Dorsolateral prefrontal cortex (tissue), 120 donors: ENCODE measurements at regions of chr22 and their contacts with region 1.

Region 1: DNA sequence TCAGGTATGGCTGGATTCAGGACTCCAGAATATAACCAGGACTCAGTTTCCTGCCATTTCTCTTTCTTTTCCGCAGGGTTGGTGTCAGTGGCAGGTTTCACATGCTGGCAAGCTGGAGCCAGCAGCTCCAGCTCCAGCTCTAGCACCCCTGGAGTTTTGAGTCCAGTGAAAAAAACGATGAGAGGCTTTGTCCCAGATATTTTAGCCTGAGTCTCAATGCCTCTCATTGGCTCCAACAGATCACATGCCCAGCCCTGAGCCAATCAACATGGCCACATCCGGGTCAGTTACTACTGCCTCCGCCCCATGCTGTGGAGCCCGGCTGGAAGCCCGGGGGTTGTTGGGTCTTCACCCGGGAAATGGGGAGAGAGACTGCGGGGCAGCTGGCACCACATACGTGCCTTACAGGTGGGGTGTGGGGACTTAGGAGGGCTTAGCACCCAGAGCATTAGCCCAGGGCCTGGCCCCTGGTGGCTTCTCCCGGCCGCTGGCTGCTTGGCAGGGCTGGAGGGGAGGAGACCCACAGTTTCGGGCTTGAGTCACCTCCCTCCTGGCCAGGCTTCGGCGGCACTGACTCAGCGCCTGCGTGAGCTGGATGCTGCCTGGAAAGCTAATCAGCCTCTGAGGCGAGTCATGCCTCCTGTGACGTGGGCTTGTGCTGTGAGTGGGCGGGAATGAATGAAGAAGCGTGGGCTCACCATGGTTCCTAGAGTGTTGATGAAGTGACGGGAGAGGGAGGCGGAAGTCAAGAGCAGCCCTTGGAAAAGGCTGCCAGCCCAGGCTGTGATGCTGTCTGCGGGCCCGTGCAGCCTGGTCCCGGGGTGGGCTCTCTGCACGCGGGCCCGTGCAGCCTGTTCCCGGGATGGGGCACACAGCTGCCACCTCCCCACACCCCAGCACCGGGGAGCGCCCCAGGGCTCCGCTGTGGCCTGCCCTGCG is 15.3 kb upstream of the MRTFA start:
- DNase-seq: peak; percentile 91 to 99 (median 97)
- H3K4me3 ChIP-seq: peak overlapping the region; percentile 54 to 93 (median 74)
- H3K27ac ChIP-seq: peak overlapping the region; percentile 89 to 100 (median 98)
- H3K27me3 ChIP-seq: no peaks in the 10 kb centered on the region
- CTCF ChIP-seq: peak in 20 of 56 donors; percentile 0 to 38 (median 17)

Region 2: GRCh38 chr22:40426594-40427333 is 225.1 kb before region 1 on chr22:
- intact Hi-C with region 1: loop called in 1 of 2 experiments (anchors 5 kb)
- DNase-seq: peak in 8 of 10 donors; percentile 70 to 93 (median 83)
- H3K4me3 ChIP-seq: peak overlapping the region in 10 of 59 donors; percentile 1 to 48 (median 8)
- H3K27ac ChIP-seq: peak overlapping the region; percentile 41 to 94 (median 84)
- H3K27me3 ChIP-seq: no peaks in the 10 kb centered on the region
- CTCF ChIP-seq: peak in 6 of 56 donors; percentile 12 to 38 (median 18)

Region 3: GRCh38 chr22:40818747-40819598 is 167.1 kb after region 1 on chr22 and contains the start of gene SLC25A17:
- intact Hi-C with region 1: loop called in 1 of 2 experiments (anchors 5 kb)
- DNase-seq: peak; percentile 73 to 93 (median 87)
- H3K4me3 ChIP-seq: peak within 1 kb of the TSS; percentile 66 to 100 (median 94)
- H3K27ac ChIP-seq: peak within 1 kb of the TSS in 50 of 59 donors; percentile 3 to 90 (median 71)
- H3K27me3 ChIP-seq: no peaks in the 10 kb centered on the region
- CTCF ChIP-seq: peak in 44 of 56 donors; percentile 15 to 60 (median 38)
- total RNA-seq, gene SLC25A17: 11.1 to 26.6 (median 17.2) TPM

Region 4: GRCh38 chr22:40856513-40857308 is 204.9 kb after region 1 on chr22 and contains the starts of genes ST13 and XPNPEP3:
- intact Hi-C with region 1: loop called in 1 of 2 experiments (anchors 5 kb)
- DNase-seq: peak; percentile 93 to 97 (median 95)
- H3K4me3 ChIP-seq: peak within 1 kb of the TSS; percentile 70 to 100 (median 94)
- H3K27ac ChIP-seq: peak within 1 kb of the TSS; percentile 94 to 100 (median 100)
- H3K27me3 ChIP-seq: no peaks in the 10 kb centered on the region
- CTCF ChIP-seq: peak in 26 of 56 donors; percentile 3 to 40 (median 19)
- total RNA-seq, gene ST13: 157 to 321 (median 196) TPM
- total RNA-seq, gene XPNPEP3: 13.7 to 36.2 (median 20.5) TPM

Region 5: DNA sequence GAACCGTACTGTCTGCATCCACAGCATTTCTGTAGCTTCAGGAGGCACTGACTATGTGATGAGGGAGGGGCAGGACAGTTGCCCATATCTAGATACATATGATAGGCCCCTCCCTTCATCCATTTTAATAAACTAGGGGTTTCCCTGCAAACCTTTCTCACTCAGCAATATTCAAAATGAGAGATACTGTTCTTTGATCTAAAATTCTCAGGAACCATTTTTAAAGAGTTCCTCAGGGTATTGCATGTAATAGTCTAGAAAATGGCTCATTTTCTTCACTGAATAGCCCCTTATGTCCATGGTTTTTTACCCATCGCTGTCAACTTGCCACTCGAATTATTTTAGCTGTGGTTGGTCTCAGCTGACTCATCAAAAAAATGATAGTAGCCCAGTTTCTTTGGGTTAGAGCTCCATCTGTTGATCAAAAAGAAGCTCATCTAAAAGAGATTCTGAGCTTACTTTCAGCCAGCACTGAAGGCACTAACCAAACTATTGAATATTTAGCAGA is 247.1 kb after region 1 on chr22:
- intact Hi-C with region 1: loop called in 1 of 2 experiments (anchors 2 kb)
- DNase-seq: peak in 1 of 10 donors; percentile 4
- H3K4me3 ChIP-seq: peak overlapping the region in 9 of 59 donors; percentile 3 to 34 (median 21)
- H3K27ac ChIP-seq: peak overlapping the region in 10 of 59 donors; percentile 0 to 65 (median 28)
- H3K27me3 ChIP-seq: no peaks in the 10 kb centered on the region
- CTCF ChIP-seq: peak in 54 of 56 donors; percentile 40 to 83 (median 64)